ENCODE measurements at regions of chr2 and their contacts with region 1.

Region 1: GRCh38 chr2:230347659-230348305 is 20.8 kb downstream of the SP140L start:
- DNase-seq: peak; percentile 45
- H3K4me3 Mint-ChIP-seq: peak overlapping the region; percentile 61
- H3K27ac Mint-ChIP-seq: peak overlapping the region; percentile 94
- H3K4me1 Mint-ChIP-seq: peaks cover 73% of the 10 kb centered on the region
- H3K27me3 Mint-ChIP-seq: no peaks in the 10 kb centered on the region

Region 2: DNA sequence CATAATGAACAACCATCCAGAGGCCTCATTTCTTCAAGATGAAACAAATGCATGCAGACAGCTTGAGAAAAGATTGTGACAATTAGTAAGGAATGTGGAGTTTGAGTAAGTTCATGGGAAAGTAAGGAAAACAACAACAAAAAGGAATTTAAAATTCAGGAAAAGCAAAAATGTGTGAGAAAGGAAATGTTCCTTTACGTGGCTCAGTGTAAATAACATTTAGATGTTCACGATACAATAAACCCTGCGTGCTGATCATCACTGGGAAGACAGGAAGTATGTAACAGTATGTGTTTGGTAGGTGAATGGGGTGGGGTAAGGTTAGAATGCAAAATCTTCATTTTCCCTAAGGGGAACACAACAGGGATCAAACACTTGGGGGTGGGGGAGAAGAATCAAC is 498.7 kb before region 1 on chr2:
- intact Hi-C with region 1: no loop called
- DNase-seq: no peak
- H3K4me3 Mint-ChIP-seq: no peak overlapping the region
- H3K27ac Mint-ChIP-seq: no peak overlapping the region
- H3K4me1 Mint-ChIP-seq: peaks cover 40% of the 10 kb centered on the region
- H3K27me3 Mint-ChIP-seq: no peaks in the 10 kb centered on the region

Region 3: DNA sequence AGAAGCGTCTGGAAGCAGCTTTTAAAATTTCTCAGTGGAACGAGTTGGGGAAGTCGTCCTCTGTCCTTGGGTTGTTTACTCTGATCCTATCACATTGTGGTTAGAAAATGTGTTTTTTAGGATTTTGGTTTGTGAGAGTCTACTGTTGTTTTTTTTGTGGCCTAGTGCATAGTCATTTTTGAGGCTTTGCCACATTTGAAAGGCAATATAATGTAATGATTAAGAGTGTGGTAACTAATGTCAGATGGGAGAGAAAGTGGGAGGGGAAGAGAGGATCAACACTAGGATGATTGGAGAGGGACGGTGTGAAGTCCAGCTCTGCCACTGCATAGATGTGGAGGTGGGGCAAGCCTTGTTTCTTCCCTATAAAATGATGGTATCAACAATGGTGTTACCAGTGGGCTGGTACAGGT is 12.3 kb before region 1 on chr2:
- intact Hi-C with region 1: loop called (anchors 1 kb)
- DNase-seq: no peak
- H3K4me3 Mint-ChIP-seq: peak overlapping the region; percentile 57
- H3K27ac Mint-ChIP-seq: peak overlapping the region; percentile 86
- H3K4me1 Mint-ChIP-seq: peaks cover 54% of the 10 kb centered on the region
- H3K27me3 Mint-ChIP-seq: no peaks in the 10 kb centered on the region

Region 4: GRCh38 chr2:230362030-230362691 is 14.4 kb after region 1 on chr2:
- intact Hi-C with region 1: no loop called
- DNase-seq: no peak
- H3K4me3 Mint-ChIP-seq: no peak overlapping the region
- H3K27ac Mint-ChIP-seq: peak overlapping the region; percentile 54
- H3K4me1 Mint-ChIP-seq: peaks cover 36% of the 10 kb centered on the region
- H3K27me3 Mint-ChIP-seq: no peaks in the 10 kb centered on the region

Region 5: DNA sequence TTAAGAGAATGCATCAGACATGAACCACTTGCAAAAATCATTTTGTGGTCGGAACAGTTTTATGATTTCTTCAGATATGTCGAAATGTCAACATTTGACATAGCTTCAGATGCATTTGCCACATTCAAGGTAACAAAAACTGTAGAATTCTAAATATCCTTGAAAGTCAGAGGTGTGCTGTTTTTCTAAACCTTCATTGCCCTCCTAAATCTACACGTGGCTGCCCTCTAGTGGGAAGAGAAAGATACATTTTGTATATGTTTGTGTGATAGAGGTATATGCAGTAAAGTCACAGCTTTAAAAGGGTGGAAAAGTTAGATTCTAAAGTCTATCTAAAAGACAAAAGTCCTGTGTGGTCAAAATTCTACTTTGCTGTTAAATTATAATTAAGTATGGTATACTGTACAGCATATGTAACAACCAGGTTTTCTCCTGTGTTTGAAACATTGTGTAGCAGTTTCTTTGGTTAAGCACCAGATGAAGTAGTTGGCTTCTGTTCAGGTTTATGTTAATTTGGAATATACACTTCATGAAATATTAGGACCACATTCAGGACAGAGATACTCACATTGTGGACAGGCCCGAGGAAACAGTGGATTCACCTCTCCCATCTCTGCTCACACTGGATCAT is 451.1 kb after region 1 on chr2:
- intact Hi-C with region 1: loop called (anchors 10 kb)
- DNase-seq: no peak
- H3K4me3 Mint-ChIP-seq: no peak overlapping the region
- H3K27ac Mint-ChIP-seq: peak overlapping the region; percentile 50
- H3K4me1 Mint-ChIP-seq: peaks cover 20% of the 10 kb centered on the region
- H3K27me3 Mint-ChIP-seq: no peaks in the 10 kb centered on the region

Measured in activated T-helper 2 cell treated with anti-CD3 and anti-CD28 coated beads, Interferon-gamma antibody, Interleukin-2, Interleukin-4, amounts not matched to agents 10 μg/mL and 5 μg/mL and 100 μg/mL, durations not matched to agents 14 hours and 24 hours and 36 hours (primary cell).